ENCODE measurements at regions of chr11 and their contacts with region 1.

Region 1: GRCh38 chr11:73384872-73385689 is 8.9 kb downstream of the RELT start:
- DNase-seq: no peak
- H3K4me3 ChIP-seq: no peak overlapping the region
- H3K27ac ChIP-seq: no peak overlapping the region
- H3K4me1 ChIP-seq: peaks cover 15 to 24% of the 10 kb centered on the region in 2 experiments; a peak in 2 of 4 replicates
- H3K27me3 ChIP-seq: no peaks in the 10 kb centered on the region
- CTCF ChIP-seq: no peak
- EP300 ChIP-seq: no peak
- RAD21 ChIP-seq: no peak

Region 2: DNA sequence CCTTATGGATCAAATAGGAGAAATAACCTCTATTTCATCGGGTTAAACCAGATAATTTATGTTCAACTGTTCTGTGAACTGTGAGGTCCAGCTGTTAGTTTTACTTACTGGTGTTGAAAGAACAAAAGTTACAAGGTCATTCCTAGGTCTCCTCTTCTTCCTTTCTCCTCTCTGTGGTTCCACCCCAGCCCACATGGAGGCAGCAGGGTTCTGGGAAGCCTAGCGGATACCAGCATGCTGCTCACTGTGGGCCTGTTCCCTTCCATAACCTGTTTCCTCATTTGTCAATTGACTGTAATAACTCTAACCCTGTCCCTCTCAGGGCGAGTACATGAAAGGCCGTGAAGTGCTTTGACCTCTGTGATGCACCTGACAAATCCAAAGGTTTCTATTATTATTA is 19.0 kb after region 1 on chr11:
- CTCF ChIA-PET with region 1: interaction called, 10 read pairs
- POLR2A ChIA-PET with region 1: no interaction called
- DNase-seq: peak; percentile 84
- H3K4me3 ChIP-seq: no peak overlapping the region
- H3K27ac ChIP-seq: no peak overlapping the region
- H3K4me1 ChIP-seq: no peaks in the 10 kb centered on the region
- H3K27me3 ChIP-seq: no peaks in the 10 kb centered on the region
- CTCF ChIP-seq: peak; percentile 81
- EP300 ChIP-seq: no peak
- RAD21 ChIP-seq: peak; percentile 94

Region 3: GRCh38 chr11:73647459-73648100 is 262.5 kb after region 1 on chr11:
- CTCF ChIA-PET with region 1: no interaction called
- POLR2A ChIA-PET with region 1: no interaction called
- DNase-seq: peak; percentile 87
- H3K4me3 ChIP-seq: peak overlapping the region in 1 of 2 experiments; percentile 20; a peak in 2 of 4 replicates
- H3K27ac ChIP-seq: no peak overlapping the region
- H3K4me1 ChIP-seq: peaks cover 0 to 7% of the 10 kb centered on the region in 2 experiments; a peak in 1 of 4 replicates
- H3K27me3 ChIP-seq: no peaks in the 10 kb centered on the region
- CTCF ChIP-seq: no peak
- EP300 ChIP-seq: no peak
- RAD21 ChIP-seq: no peak